ENCODE measurements at regions of chr2 and their contacts with region 1.

Region 1: GRCh38 chr2:57965961-57966360 is 80.6 kb upstream of the VRK2 start:
- DNase-seq: no peak
- ATAC-seq: no peak
- H3K4me3 ChIP-seq: no peak overlapping the region
- H3K27ac ChIP-seq: no peak overlapping the region
- H3K4me1 ChIP-seq: no peaks in the 10 kb centered on the region
- H3K27me3 ChIP-seq: no peaks in the 10 kb centered on the region
- CTCF ChIP-seq: no peak
- POLR2A ChIP-seq: no peak

Region 2: GRCh38 chr2:57720728-57721627 is 245.0 kb before region 1 on chr2:
- in situ Hi-C with region 1: no loop called
- intact Hi-C with region 1: loop called (anchors 5 kb)
- DNase-seq: no peak
- ATAC-seq: peak; percentile 62 to 75
- H3K4me3 ChIP-seq: peak overlapping the region; percentile 16 to 43 (median 26)
- H3K27ac ChIP-seq: no peak overlapping the region
- H3K4me1 ChIP-seq: no peaks in the 10 kb centered on the region
- H3K27me3 ChIP-seq: no peaks in the 10 kb centered on the region
- CTCF ChIP-seq: peak in 4 of 5 experiments; percentile 21 to 59 (median 43)
- POLR2A ChIP-seq: no peak

Measured in gastrocnemius medialis (tissue), 4 donors.